H1 (cell line): ENCODE measurements at regions of chr2 and their contacts with region 1.

Region 1: DNA sequence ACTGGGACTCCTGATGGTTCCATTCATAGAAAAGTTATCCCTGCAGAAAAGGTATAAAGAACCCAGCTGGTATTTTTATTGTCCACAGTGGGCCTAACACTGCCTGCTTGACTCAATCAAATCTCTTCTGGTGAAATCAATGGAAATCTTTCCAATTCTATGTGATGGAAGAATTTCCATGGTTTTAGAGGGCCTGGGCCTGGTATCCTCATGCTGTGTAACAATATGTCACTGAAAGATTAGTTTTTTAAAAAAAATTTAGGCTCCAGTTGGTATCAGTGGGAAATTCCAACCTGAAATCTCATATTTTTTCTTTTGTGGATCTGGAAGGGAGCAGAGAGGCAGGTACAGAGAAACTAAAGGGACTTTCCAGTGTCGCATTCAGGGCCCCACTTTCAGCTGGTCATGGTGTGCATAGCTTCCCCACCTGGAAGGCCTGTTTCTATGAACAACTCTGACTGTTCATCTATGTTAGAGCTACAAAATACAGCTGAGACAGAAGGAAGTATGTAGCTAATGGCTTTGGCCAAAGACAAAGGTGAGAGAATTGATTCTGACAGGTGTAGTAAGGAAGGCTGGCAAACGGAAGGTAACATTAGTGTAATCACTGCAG is 20.9 kb downstream of the NEB start:
- DNase-seq: no peak
- H3K4me3 ChIP-seq: no peak overlapping the region
- H3K27ac ChIP-seq: no peak overlapping the region
- H3K4me1 ChIP-seq: no peaks in the 10 kb centered on the region
- H3K27me3 ChIP-seq: no peaks in the 10 kb centered on the region
- CTCF ChIP-seq: no peak
- EP300 ChIP-seq: no peak
- POLR2A ChIP-seq: no peak
- RAD21 ChIP-seq: no peak

Region 2: GRCh38 chr2:151728804-151729414 is 15.5 kb after region 1 on chr2:
- CTCF ChIA-PET with region 1: interaction called, 16 read pairs
- POLR2A ChIA-PET with region 1: interaction called, 3 read pairs
- DNase-seq: no peak
- H3K4me3 ChIP-seq: no peak overlapping the region
- H3K27ac ChIP-seq: no peak overlapping the region
- H3K4me1 ChIP-seq: peaks cover 3 to 16% (median 11%) of the 10 kb centered on the region in 4 experiments; a peak in 5 of 7 replicates
- H3K27me3 ChIP-seq: no peaks in the 10 kb centered on the region
- CTCF ChIP-seq: peak in 2 of 3 experiments; percentile 15 to 49; a peak in 1 of 4 replicates
- EP300 ChIP-seq: no peak
- POLR2A ChIP-seq: no peak
- RAD21 ChIP-seq: peak in 1 of 2 experiments; percentile 24; a peak in 2 of 4 replicates

Region 3: DNA sequence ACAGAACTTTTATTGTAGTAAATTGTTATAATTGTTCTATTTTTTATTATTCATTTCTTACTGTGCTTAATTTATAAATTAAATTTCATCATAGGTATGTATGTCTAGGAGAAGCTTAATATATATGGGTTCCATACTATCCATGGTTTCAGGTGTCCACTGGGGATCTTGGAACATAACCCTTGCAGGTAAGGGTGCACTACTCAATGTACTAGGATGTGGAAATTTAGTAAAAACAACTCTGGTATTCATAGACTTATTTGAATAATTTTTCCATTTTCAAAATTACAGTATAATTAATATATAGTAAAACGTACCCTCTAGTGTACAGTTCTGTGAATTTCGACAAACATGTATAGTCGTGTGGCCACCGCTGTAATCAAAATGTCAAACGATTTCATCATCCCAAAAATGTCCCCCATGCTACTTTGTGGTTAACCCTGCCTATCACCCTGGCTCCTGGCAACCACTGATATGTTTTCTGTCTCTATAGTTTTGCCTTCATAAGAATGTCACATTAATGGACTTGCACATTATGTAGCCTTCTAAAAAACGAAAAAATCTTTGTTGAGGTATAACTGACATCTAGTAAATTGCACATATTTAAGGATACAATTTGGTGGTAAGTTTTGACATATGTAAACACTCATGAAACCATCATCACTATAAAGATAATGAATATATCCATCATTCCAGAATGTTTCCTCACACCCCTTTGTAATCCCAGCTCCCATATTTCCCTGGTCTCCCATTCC is 69.2 kb after region 1 on chr2:
- CTCF ChIA-PET with region 1: no interaction called
- POLR2A ChIA-PET with region 1: no interaction called
- DNase-seq: no peak
- H3K4me3 ChIP-seq: no peak overlapping the region
- H3K27ac ChIP-seq: no peak overlapping the region
- H3K4me1 ChIP-seq: no peaks in the 10 kb centered on the region
- H3K27me3 ChIP-seq: no peaks in the 10 kb centered on the region
- CTCF ChIP-seq: no peak
- EP300 ChIP-seq: no peak
- POLR2A ChIP-seq: no peak
- RAD21 ChIP-seq: no peak